GM12878 (cell line): ENCODE measurements at regions of chr9 and their contacts with region 1.

Region 1: DNA sequence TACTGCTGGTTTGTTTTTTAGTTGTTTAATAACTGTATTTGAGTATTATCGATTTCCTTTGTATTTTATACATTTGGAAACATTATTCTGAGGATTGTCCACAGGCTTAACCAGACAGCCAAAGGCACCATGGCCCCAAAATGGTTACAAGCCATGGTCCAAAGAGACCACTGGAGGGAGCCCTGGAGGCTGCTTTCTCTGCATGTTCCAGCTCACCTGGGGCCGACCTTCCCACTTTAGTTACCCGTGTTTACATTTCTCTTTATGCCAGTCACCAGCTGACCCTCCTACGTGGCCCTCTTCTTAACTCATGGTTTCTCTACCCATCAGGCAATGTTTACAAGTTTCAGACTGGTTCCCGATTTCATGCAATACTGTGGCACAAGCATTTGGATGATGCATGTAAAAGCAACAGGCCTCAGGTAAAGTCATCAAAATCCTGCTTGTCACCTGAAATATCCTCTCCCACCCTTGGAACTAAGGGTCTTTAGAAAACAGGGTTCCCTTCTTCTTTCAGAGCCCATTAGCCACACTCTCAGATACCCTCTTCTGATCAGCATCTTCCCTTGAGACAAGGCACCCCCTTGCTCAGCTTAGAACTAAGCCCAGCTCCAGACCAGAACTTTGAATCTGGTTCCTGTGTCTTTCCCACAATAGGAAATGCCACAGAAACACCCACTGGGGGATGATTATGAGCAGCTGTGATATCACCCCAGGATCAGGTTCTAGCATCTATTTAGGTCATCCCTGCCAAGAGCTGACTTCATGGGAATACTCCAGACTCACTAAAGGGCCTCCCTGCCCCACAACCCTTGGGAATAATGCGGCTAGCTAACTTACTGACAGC is 49.9 kb upstream of the GARNL3 start:
- DNase-seq: no peak
- ATAC-seq: peak; percentile 96
- H3K4me3 ChIP-seq: no peak overlapping the region
- H3K27ac ChIP-seq: no peak overlapping the region
- H3K4me1 ChIP-seq: no peaks in the 10 kb centered on the region
- H3K27me3 ChIP-seq: no peaks in the 10 kb centered on the region
- CTCF ChIP-seq: peak; percentile 85 to 91 (median 86); a peak in 5 of 6 replicates
- EP300 ChIP-seq: no peak
- POLR2A ChIP-seq: no peak
- RAD21 ChIP-seq: peak; percentile 88

Region 2: GRCh38 chr9:127347831-127348779 is 133.5 kb after region 1 on chr9:
- CTCF ChIA-PET with region 1: interaction called, 5 read pairs
- POLR2A ChIA-PET with region 1: no interaction called
- RAD21 ChIA-PET with region 1: interaction called, 3 read pairs
- SMC1A ChIA-PET with region 1: interaction called, 9 read pairs
- in situ Hi-C with region 1: no loop called
- intact Hi-C with region 1: loop called (anchors 5 kb)
- DNase-seq: no peak
- ATAC-seq: peak; percentile 50
- H3K4me3 ChIP-seq: no peak overlapping the region
- H3K27ac ChIP-seq: no peak overlapping the region
- H3K4me1 ChIP-seq: no peaks in the 10 kb centered on the region
- H3K27me3 ChIP-seq: no peaks in the 10 kb centered on the region
- CTCF ChIP-seq: peak; percentile 42 to 50 (median 45); a peak in 5 of 6 replicates
- EP300 ChIP-seq: no peak
- POLR2A ChIP-seq: no peak
- RAD21 ChIP-seq: peak; percentile 67

Region 3: DNA sequence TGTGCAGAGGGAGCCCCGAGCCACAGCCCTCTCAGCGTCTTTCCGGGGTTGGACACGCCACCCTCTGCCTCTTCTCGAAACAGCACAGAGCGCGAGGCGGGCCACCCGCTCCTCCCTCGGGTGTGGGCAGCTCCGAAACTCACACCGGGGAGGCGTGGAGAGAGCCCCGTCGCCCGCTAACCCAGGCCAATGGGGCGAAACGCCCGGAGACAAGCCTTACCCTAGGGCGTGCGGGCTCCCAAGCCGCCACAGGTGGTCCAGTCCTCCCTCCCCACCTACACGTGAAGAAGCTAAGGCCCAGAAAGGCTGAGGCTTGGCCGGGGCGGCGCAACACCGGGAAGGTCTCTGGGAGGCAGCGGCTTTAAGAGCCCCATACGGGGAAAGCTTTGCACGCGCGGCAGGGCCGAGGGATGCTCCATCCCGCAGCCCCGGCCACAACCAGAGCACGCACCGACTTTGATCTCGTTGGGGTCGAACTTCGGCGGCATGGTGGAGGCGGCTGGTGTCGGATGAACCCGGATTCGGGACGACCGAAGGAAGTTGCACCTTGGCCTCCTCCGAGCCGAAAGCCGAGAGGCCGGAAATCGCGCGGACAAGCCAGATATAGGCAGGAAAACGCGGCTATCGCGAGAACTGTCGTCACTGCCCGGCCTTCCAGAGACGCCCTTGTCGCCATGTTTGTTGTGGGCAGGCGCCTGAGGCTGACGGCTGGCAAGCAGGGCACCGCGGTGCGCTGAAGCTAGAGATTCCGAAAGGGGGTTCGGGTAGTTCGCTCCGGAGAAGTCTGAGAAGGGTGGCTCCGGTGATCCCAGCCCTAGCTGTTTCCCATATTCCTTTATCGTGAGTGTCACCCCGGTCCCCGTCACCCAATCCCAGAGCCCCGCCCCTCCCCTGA is 236.4 kb after region 1 on chr9 and contains the starts of genes LRSAM1 and RPL12:
- CTCF ChIA-PET with region 1: interaction called, 6 read pairs
- POLR2A ChIA-PET with region 1: interaction called, 3 read pairs
- RAD21 ChIA-PET with region 1: no interaction called
- SMC1A ChIA-PET with region 1: interaction called, 6 read pairs
- in situ Hi-C with region 1: no loop called
- intact Hi-C with region 1: loop called (anchors 10 kb)
- DNase-seq: peak; percentile 79
- ATAC-seq: peak; percentile 74
- H3K4me3 ChIP-seq: peak within 1 kb of the TSS; percentile 93
- H3K27ac ChIP-seq: peak within 1 kb of the TSS; percentile 94
- H3K4me1 ChIP-seq: peaks cover 6% of the 10 kb centered on the region; the same call in 1 of the 2 replicates
- H3K27me3 ChIP-seq: no peaks in the 10 kb centered on the region
- CTCF ChIP-seq: peak in 1 of 3 experiments; percentile 8; a peak in 1 of 6 replicates
- EP300 ChIP-seq: no peak
- POLR2A ChIP-seq: peak; percentile 99
- RAD21 ChIP-seq: 0 out of 2 replicates have a peak, but pooled peaks have one; percentile 0
- polyA plus RNA-seq, gene LRSAM1: 0.14 to 0.53 TPM
- polyA plus RNA-seq, gene RPL12: 3,077 to 3,412 TPM